ENCODE measurements at regions of chr10 and their contacts with region 1.

Region 1: GRCh38 chr10:112722758-112723157 is 227.3 kb upstream of the TCF7L2 start:
- DNase-seq: no peak
- H3K4me3 ChIP-seq: no peak overlapping the region
- H3K27ac ChIP-seq: no peak overlapping the region
- H3K4me1 ChIP-seq: no peaks in the 10 kb centered on the region
- H3K27me3 ChIP-seq: no peaks in the 10 kb centered on the region
- CTCF ChIP-seq: no peak
- EP300 ChIP-seq: no peak
- POLR2A ChIP-seq: no peak

Region 2: DNA sequence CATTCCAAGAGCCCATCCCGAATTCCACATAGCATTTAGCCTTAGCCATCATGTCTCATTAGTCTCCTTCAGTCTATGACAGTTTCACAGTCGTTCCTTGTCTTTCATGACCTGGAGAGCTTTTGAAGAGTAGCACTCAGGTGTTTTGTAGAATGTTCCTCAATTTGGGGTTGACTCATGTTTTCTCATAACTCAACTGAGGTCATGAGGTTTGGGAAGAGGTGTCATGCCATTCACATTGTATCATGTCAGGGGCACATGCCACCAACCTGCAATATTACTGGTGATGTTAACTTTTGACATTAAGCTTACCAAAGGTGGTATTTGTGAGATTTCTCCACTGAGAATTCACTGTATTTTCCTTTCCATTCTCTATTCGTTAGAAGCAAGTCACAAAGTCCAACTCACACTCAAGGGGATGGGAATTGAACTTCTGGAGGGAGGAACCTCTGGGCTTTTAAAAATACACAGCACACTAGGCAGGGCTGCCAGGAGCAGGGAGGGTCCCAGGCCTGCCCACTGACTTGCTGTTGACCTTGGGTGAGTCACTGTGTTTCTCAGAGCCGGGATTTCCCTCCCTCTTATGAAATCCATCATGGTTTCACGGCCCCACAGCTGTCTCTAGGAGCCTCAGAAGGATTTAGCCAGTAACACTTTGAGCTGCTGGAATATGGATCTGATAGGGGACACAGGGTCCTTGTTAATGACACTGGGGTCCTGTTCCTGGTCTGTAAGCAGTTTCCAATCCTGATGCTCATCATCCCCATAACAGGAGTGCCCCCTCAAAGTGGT is 152.9 kb after region 1 on chr10:
- intact Hi-C with region 1: no loop called
- DNase-seq: no peak
- H3K4me3 ChIP-seq: no peak overlapping the region
- H3K27ac ChIP-seq: no peak overlapping the region
- H3K4me1 ChIP-seq: no peaks in the 10 kb centered on the region
- H3K27me3 ChIP-seq: no peaks in the 10 kb centered on the region
- CTCF ChIP-seq: no peak
- EP300 ChIP-seq: no peak
- POLR2A ChIP-seq: no peak

Region 3: GRCh38 chr10:113126229-113127201 is 403.8 kb after region 1 on chr10:
- intact Hi-C with region 1: loop called (anchors 2 kb)
- DNase-seq: no peak
- H3K4me3 ChIP-seq: peak overlapping the region; percentile 36 to 57 (median 44)
- H3K27ac ChIP-seq: peak overlapping the region in 1 of 4 donors; percentile 36
- H3K4me1 ChIP-seq: peaks cover 0 to 31% (median 16%) of the 10 kb centered on the region in 4 donors
- H3K27me3 ChIP-seq: no peaks in the 10 kb centered on the region
- CTCF ChIP-seq: peak; percentile 80 to 89 (median 84)
- EP300 ChIP-seq: no peak
- POLR2A ChIP-seq: no peak

Region 4: DNA sequence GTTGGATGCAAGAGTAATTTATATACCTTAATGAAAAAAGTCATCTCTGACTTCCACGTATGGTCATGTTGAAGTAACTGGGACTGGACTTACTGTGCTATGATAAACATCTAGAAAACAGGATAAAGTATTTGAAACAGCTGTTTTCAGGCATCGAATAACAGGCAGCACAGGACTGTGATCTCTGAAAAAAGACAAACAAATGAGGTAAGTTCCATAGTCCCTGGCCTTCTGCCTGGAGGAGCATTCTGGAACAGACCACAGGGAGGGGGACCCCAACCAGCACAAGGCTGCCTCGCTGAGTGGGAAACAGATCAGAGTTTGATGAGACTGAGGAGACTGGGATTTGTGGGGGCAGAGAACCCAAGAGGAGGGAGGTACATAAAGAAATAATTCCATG is 741.0 kb after region 1 on chr10:
- intact Hi-C with region 1: no loop called
- DNase-seq: peak; percentile 57
- H3K4me3 ChIP-seq: no peak overlapping the region
- H3K27ac ChIP-seq: no peak overlapping the region
- H3K4me1 ChIP-seq: peaks cover 0 to 7% (median 2%) of the 10 kb centered on the region in 4 donors
- H3K27me3 ChIP-seq: no peaks in the 10 kb centered on the region
- CTCF ChIP-seq: no peak
- EP300 ChIP-seq: no peak
- POLR2A ChIP-seq: no peak